ENCODE measurements at regions of chr16 and their contacts with region 1.

Region 1: GRCh38 chr16:55552621-55553020 is 13.9 kb upstream of the CAPNS2 start:
- DNase-seq: no peak
- H3K4me3 ChIP-seq: no peak overlapping the region
- H3K27ac ChIP-seq: no peak overlapping the region
- H3K4me1 ChIP-seq: peaks cover 0 to 8% (median 0%) of the 10 kb centered on the region in 4 donors
- H3K27me3 ChIP-seq: peaks cover 3% of the 10 kb centered on the region
- CTCF ChIP-seq: no peak
- EP300 ChIP-seq: no peak
- POLR2A ChIP-seq: no peak

Region 2: GRCh38 chr16:55701442-55702319 is 149.1 kb after region 1 on chr16:
- in situ Hi-C with region 1: loop called in 2 of 4 experiments (anchors 10 kb)
- intact Hi-C with region 1: no loop called
- DNase-seq: peak; percentile 54
- H3K4me3 ChIP-seq: no peak overlapping the region
- H3K27ac ChIP-seq: no peak overlapping the region
- H3K4me1 ChIP-seq: no peaks in the 10 kb centered on the region
- H3K27me3 ChIP-seq: no peaks in the 10 kb centered on the region
- CTCF ChIP-seq: peak; percentile 48 to 56 (median 53)
- EP300 ChIP-seq: no peak
- POLR2A ChIP-seq: no peak